ENCODE measurements at regions of chr1 and their contacts with region 1.

Region 1: DNA sequence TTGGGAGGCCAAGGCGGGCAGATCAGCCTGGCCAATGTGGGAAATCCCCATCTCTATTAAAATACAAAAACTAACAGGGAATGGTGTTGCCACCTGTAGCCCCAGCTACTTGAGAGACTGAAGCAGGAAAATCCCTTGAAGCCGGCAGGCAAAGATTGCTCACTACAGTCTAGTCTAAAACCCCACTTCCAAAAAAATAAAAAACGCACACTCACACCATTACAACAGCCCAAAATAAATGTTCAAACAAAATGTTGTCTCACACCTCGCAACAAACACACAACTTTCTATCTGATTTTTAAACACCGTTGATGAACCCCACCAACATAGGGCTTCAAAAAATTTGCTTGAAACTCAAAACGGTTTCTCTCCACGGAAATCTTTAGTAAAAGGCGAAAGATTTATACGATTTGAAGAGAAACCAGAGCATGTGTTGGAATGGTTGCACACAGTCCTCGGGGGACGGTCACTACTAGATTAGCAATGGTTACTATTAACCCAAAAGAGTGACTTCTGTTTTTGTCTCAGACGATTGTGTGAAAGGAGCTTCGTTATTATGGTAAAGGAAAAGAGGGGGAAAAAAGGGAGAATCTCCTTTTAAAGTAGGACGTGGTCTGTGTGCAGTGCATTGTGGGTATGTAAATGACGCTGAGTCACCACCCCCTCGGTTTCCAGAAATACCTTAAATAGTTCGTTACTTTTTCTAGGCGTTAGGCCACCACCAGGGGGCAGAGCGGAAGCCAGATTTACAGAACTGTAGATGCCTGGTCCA is at the start of gene RNU5D-1:
- DNase-seq: peak; percentile 87 to 98 (median 94)
- ATAC-seq: peak; percentile 76
- H3K4me3 ChIP-seq: peak within 1 kb of the TSS; percentile 46
- H3K4me3 Mint-ChIP-seq: peak within 1 kb of the TSS; percentile 68
- H3K27ac ChIP-seq: peak within 1 kb of the TSS; percentile 93 to 96
- H3K27ac Mint-ChIP-seq: peak within 1 kb of the TSS; percentile 97
- H3K4me1 ChIP-seq: peaks cover 33% of the 10 kb centered on the region
- H3K4me1 Mint-ChIP-seq: peaks cover 35% of the 10 kb centered on the region
- H3K27me3 ChIP-seq: no peaks in the 10 kb centered on the region
- H3K27me3 Mint-ChIP-seq: no peaks in the 10 kb centered on the region
- CTCF ChIP-seq: peak; percentile 77
- total RNA-seq, gene RNU5D-1: not detected

Region 2: GRCh38 chr1:43729816-43730463 is 1001.0 kb before region 1 on chr1:
- CTCF ChIA-PET with region 1: no interaction called
- POLR2A ChIA-PET with region 1: no interaction called
- intact Hi-C with region 1: no loop called
- DNase-seq: no peak
- ATAC-seq: no peak
- H3K4me3 ChIP-seq: no peak overlapping the region
- H3K4me3 Mint-ChIP-seq: no peak overlapping the region
- H3K27ac ChIP-seq: no peak overlapping the region
- H3K27ac Mint-ChIP-seq: no peak overlapping the region
- H3K4me1 ChIP-seq: no peaks in the 10 kb centered on the region
- H3K4me1 Mint-ChIP-seq: peaks cover 5% of the 10 kb centered on the region
- H3K27me3 ChIP-seq: no peaks in the 10 kb centered on the region
- H3K27me3 Mint-ChIP-seq: no peaks in the 10 kb centered on the region
- CTCF ChIP-seq: no peak

Region 3: DNA sequence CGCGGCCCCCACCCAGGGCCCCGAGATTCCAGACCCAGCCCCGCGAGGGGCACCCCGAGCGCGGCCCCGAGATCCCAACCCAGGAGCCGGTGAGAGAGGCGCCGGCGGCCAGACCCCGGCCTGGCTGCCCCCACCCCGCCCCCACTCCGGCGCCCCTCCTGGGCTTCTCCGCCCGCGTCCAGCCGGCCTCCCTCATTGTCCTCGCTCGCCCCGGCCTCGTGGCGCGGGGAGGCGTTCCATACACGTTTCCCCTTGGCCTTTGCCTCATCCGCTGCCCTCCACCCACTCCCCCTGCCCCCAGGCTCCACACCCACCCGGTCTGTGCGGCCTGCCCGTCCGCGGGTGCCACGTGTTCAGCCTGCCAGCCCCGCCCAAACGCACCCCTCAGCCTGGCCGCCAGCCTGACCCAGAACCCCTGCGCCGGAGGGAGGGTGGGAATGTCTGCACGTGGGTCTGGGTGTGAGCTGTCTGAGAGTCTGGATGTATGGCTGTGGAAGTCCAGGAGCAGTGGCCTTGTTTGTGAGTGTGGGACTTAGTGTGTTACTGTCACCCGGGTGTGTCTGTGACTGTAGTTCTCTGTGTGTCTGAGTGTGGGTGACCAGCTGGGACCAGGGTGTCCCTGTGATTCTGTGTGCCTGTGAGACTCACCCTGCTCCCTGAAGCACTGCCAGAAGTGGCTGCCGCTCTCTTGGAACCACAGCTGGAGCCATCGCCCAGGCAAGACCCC is 751.2 kb before region 1 on chr1:
- CTCF ChIA-PET with region 1: no interaction called
- POLR2A ChIA-PET with region 1: no interaction called
- intact Hi-C with region 1: no loop called
- DNase-seq: peak in 2 of 14 experiments; percentile 17 to 49
- ATAC-seq: no peak
- H3K4me3 ChIP-seq: peak overlapping the region; percentile 37
- H3K4me3 Mint-ChIP-seq: peak overlapping the region; percentile 90
- H3K27ac ChIP-seq: no peak overlapping the region
- H3K27ac Mint-ChIP-seq: no peak overlapping the region
- H3K4me1 ChIP-seq: peaks cover 43% of the 10 kb centered on the region
- H3K4me1 Mint-ChIP-seq: peaks cover 38% of the 10 kb centered on the region
- H3K27me3 ChIP-seq: peaks cover 5 to 7% of the 10 kb centered on the region in 2 experiments
- H3K27me3 Mint-ChIP-seq: peaks cover 13% of the 10 kb centered on the region
- CTCF ChIP-seq: no peak

Region 4: GRCh38 chr1:44714944-44715571 is 15.9 kb before region 1 on chr1:
- CTCF ChIA-PET with region 1: interaction called, 5 read pairs
- POLR2A ChIA-PET with region 1: interaction called, 138 read pairs
- intact Hi-C with region 1: loop called (anchors 1 to 2 kb)
- DNase-seq: peak; percentile 48 to 88 (median 56)
- ATAC-seq: peak; percentile 93
- H3K4me3 ChIP-seq: peak overlapping the region; percentile 20
- H3K4me3 Mint-ChIP-seq: peak overlapping the region; percentile 69
- H3K27ac ChIP-seq: no peak overlapping the region
- H3K27ac Mint-ChIP-seq: peak overlapping the region; percentile 78
- H3K4me1 ChIP-seq: peaks cover 44% of the 10 kb centered on the region
- H3K4me1 Mint-ChIP-seq: peaks cover 44% of the 10 kb centered on the region
- H3K27me3 ChIP-seq: no peaks in the 10 kb centered on the region
- H3K27me3 Mint-ChIP-seq: no peaks in the 10 kb centered on the region
- CTCF ChIP-seq: peak; percentile 98

Region 5: DNA sequence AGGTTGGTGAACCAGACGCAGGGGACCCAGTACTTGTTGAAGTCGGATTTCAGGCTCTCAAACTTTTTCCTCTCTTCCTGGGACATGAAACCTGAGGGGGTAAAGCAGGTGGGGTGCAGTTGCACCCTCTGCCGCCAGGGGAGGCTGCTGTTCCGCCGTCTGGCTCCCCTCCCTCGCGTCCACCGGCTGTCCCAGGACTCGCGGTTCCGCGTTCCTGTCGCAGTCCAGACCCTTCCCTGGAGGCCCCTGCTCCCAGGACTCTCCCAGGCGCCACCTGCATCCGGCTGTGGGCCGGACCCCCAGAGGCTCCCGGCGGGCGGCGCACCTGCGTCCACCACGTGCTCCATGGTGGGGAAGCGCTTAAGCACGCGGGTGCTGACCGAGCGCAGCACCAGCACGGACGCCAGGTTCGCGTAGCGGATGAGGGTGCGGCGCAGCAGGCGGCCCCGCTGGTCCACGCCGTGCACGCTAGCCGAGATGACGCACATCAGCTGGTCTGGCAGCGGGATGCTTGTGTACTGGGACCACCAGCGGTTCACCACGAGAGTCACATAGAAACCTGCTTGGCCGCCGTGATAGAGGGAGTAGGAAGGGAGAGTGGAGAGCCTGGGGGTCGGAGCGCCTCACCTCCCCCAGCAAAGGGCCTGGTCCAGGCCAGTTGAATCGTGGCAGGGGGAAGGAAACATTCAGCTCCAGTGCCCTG is 55.4 kb after region 1 on chr1:
- CTCF ChIA-PET with region 1: interaction called, 20 read pairs
- POLR2A ChIA-PET with region 1: interaction called, 19 read pairs
- intact Hi-C with region 1: no loop called
- DNase-seq: peak; percentile 64 to 89 (median 74)
- ATAC-seq: peak; percentile 84
- H3K4me3 ChIP-seq: peak overlapping the region; percentile 58
- H3K4me3 Mint-ChIP-seq: peak overlapping the region; percentile 86
- H3K27ac ChIP-seq: peak overlapping the region; percentile 4 to 37
- H3K27ac Mint-ChIP-seq: peak overlapping the region; percentile 53
- H3K4me1 ChIP-seq: peaks cover 35% of the 10 kb centered on the region
- H3K4me1 Mint-ChIP-seq: peaks cover 31% of the 10 kb centered on the region
- H3K27me3 ChIP-seq: no peaks in the 10 kb centered on the region
- H3K27me3 Mint-ChIP-seq: no peaks in the 10 kb centered on the region
- CTCF ChIP-seq: peak; percentile 99

Region 6: GRCh38 chr1:44792783-44793714 is 62.1 kb after region 1 on chr1:
- CTCF ChIA-PET with region 1: interaction called, 11 read pairs
- POLR2A ChIA-PET with region 1: interaction called, 6 read pairs
- intact Hi-C with region 1: no loop called
- DNase-seq: no peak
- ATAC-seq: no peak
- H3K4me3 ChIP-seq: no peak overlapping the region
- H3K4me3 Mint-ChIP-seq: no peak overlapping the region
- H3K27ac ChIP-seq: no peak overlapping the region
- H3K27ac Mint-ChIP-seq: no peak overlapping the region
- H3K4me1 ChIP-seq: no peaks in the 10 kb centered on the region
- H3K4me1 Mint-ChIP-seq: peaks cover 4% of the 10 kb centered on the region
- H3K27me3 ChIP-seq: no peaks in the 10 kb centered on the region
- H3K27me3 Mint-ChIP-seq: no peaks in the 10 kb centered on the region
- CTCF ChIP-seq: no peak

Region 7: GRCh38 chr1:44807262-44808062 is 76.5 kb after region 1 on chr1 and contains the start of gene DYNLT4:
- CTCF ChIA-PET with region 1: interaction called, 7 read pairs
- POLR2A ChIA-PET with region 1: interaction called, 46 read pairs
- intact Hi-C with region 1: no loop called
- DNase-seq: peak; percentile 82 to 98 (median 94)
- ATAC-seq: peak; percentile 56
- H3K4me3 ChIP-seq: peak within 1 kb of the TSS; percentile 12
- H3K4me3 Mint-ChIP-seq: peak within 1 kb of the TSS; percentile 83
- H3K27ac ChIP-seq: peak within 1 kb of the TSS; percentile 99 to 100
- H3K27ac Mint-ChIP-seq: peak within 1 kb of the TSS; percentile 99
- H3K4me1 ChIP-seq: peaks cover 100% of the 10 kb centered on the region
- H3K4me1 Mint-ChIP-seq: peaks cover 79% of the 10 kb centered on the region
- H3K27me3 ChIP-seq: no peaks in the 10 kb centered on the region
- H3K27me3 Mint-ChIP-seq: peaks cover 4% of the 10 kb centered on the region
- CTCF ChIP-seq: no peak
- total RNA-seq, gene DYNLT4: 1.8 to 2.1 TPM